Activated CD8-positive, alpha-beta T cell treated with anti-CD3 and anti-CD28 coated beads for 36 hours (primary cell): ENCODE measurements at regions of chr3 and their contacts with region 1.

Region 1: GRCh38 chr3:48439820-48440589 is at the starts of genes CCDC51 and TMA7:
- DNase-seq: peak; percentile 99
- ATAC-seq: peak; percentile 98
- H3K4me3 Mint-ChIP-seq: peak within 1 kb of the TSS; percentile 89
- H3K27ac Mint-ChIP-seq: peak within 1 kb of the TSS; percentile 97
- H3K4me1 Mint-ChIP-seq: peaks cover 30% of the 10 kb centered on the region
- H3K27me3 Mint-ChIP-seq: no peaks in the 10 kb centered on the region
- CTCF ChIP-seq: no peak
- total RNA-seq, gene CCDC51: 25.3 to 28.3 TPM
- total RNA-seq, gene TMA7: 312 to 334 TPM

Region 2: GRCh38 chr3:48247401-48247811 is 192.6 kb before region 1 on chr3:
- CTCF ChIA-PET with region 1: interaction called, 15 read pairs
- POLR2A ChIA-PET with region 1: interaction called, 3 read pairs
- intact Hi-C with region 1: no loop called
- DNase-seq: peak; percentile 31
- ATAC-seq: peak; percentile 78
- H3K4me3 Mint-ChIP-seq: peak overlapping the region; percentile 10
- H3K27ac Mint-ChIP-seq: peak overlapping the region; percentile 93
- H3K4me1 Mint-ChIP-seq: peaks cover 34% of the 10 kb centered on the region
- H3K27me3 Mint-ChIP-seq: no peaks in the 10 kb centered on the region
- CTCF ChIP-seq: no peak

Region 3: GRCh38 chr3:48301020-48301796 is 138.8 kb before region 1 on chr3:
- CTCF ChIA-PET with region 1: interaction called, 20 read pairs
- POLR2A ChIA-PET with region 1: interaction called, 4 read pairs
- intact Hi-C with region 1: no loop called
- DNase-seq: peak; percentile 96
- ATAC-seq: peak; percentile 92
- H3K4me3 Mint-ChIP-seq: peak within 1 kb of the TSS; percentile 86
- H3K27ac Mint-ChIP-seq: peak within 1 kb of the TSS; percentile 89
- H3K4me1 Mint-ChIP-seq: peaks cover 37% of the 10 kb centered on the region
- H3K27me3 Mint-ChIP-seq: no peaks in the 10 kb centered on the region
- CTCF ChIP-seq: no peak

Region 4: GRCh38 chr3:48400824-48401433 is 39.1 kb before region 1 on chr3:
- CTCF ChIA-PET with region 1: interaction called, 312 read pairs
- POLR2A ChIA-PET with region 1: interaction called, 4 read pairs
- intact Hi-C with region 1: loop called (anchors 5 kb)
- DNase-seq: peak; percentile 73
- ATAC-seq: peak; percentile 87
- H3K4me3 Mint-ChIP-seq: no peak overlapping the region
- H3K27ac Mint-ChIP-seq: no peak overlapping the region
- H3K4me1 Mint-ChIP-seq: no peaks in the 10 kb centered on the region
- H3K27me3 Mint-ChIP-seq: peaks cover 2% of the 10 kb centered on the region
- CTCF ChIP-seq: peak; percentile 90

Region 5: DNA sequence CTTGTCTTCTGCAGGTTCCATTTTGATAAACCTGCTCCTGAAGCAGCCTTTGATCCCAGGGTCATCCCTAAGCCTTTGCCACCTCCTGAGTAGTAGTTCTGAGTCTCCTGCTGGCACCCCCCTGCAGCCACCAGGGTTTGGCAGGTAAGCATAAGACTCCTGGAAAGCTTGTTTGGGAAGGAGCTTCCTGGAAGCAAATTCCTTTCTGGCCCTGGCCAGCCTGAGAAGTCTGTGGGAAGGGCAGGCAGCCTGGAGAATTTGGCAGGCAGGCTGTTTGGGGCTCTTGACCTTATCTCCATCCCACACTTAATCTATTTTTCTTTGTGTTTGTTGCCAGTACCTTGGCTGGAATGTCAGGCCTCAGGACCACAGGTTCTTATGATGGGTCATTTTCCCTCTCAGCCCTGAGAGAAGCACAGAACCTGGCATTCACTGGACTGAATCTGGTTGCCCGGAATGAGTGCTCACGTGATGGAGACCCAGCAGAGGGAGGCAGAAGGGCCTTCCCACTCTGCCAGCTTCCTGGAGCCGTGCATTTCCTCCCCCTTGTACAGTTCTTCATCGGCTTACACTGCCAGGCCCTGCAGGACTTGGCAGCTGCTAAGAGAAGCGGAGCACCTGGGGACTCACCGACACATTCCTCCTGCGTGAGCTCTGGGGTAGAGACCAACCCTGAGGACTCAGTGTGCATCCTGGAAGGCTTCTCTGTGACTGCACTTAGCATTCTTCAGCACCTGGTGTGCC is 19.9 kb after region 1 on chr3:
- CTCF ChIA-PET with region 1: interaction called, 55 read pairs
- POLR2A ChIA-PET with region 1: interaction called, 32 read pairs
- intact Hi-C with region 1: no loop called
- DNase-seq: no peak
- ATAC-seq: no peak
- H3K4me3 Mint-ChIP-seq: no peak overlapping the region
- H3K27ac Mint-ChIP-seq: no peak overlapping the region
- H3K4me1 Mint-ChIP-seq: no peaks in the 10 kb centered on the region
- H3K27me3 Mint-ChIP-seq: no peaks in the 10 kb centered on the region
- CTCF ChIP-seq: no peak

Region 6: GRCh38 chr3:48543271-48543866 is 103.4 kb after region 1 on chr3:
- CTCF ChIA-PET with region 1: interaction called, 56 read pairs
- POLR2A ChIA-PET with region 1: no interaction called
- intact Hi-C with region 1: no loop called
- DNase-seq: no peak
- ATAC-seq: no peak
- H3K4me3 Mint-ChIP-seq: no peak overlapping the region
- H3K27ac Mint-ChIP-seq: no peak overlapping the region
- H3K4me1 Mint-ChIP-seq: no peaks in the 10 kb centered on the region
- H3K27me3 Mint-ChIP-seq: no peaks in the 10 kb centered on the region
- CTCF ChIP-seq: no peak